ENCODE measurements at regions of chr12 and their contacts with region 1.

Region 1: GRCh38 chr12:25347716-25348271 is 97.1 kb upstream of the KRAS start:
- DNase-seq: peak; percentile 88 to 89
- H3K4me3 ChIP-seq: no peak overlapping the region
- H3K4me3 Mint-ChIP-seq: peak overlapping the region; percentile 19
- H3K27ac Mint-ChIP-seq: peak overlapping the region; percentile 78
- H3K4me1 ChIP-seq: peaks cover 29% of the 10 kb centered on the region
- H3K4me1 Mint-ChIP-seq: peaks cover 12% of the 10 kb centered on the region
- H3K27me3 ChIP-seq: no peaks in the 10 kb centered on the region
- H3K27me3 Mint-ChIP-seq: no peaks in the 10 kb centered on the region
- CTCF ChIP-seq: no peak

Region 2: GRCh38 chr12:25241167-25242020 is 106.4 kb before region 1 on chr12:
- CTCF ChIA-PET with region 1: no interaction called
- POLR2A ChIA-PET with region 1: no interaction called
- intact Hi-C with region 1: loop called (anchors 1 kb)
- DNase-seq: no peak
- H3K4me3 ChIP-seq: no peak overlapping the region
- H3K4me3 Mint-ChIP-seq: no peak overlapping the region
- H3K27ac Mint-ChIP-seq: no peak overlapping the region
- H3K4me1 ChIP-seq: peaks cover 39% of the 10 kb centered on the region
- H3K4me1 Mint-ChIP-seq: peaks cover 55% of the 10 kb centered on the region
- H3K27me3 ChIP-seq: no peaks in the 10 kb centered on the region
- H3K27me3 Mint-ChIP-seq: no peaks in the 10 kb centered on the region
- CTCF ChIP-seq: peak; percentile 72 to 83

Region 3: GRCh38 chr12:25256826-25257225 is 91.0 kb before region 1 on chr12:
- CTCF ChIA-PET with region 1: no interaction called
- POLR2A ChIA-PET with region 1: interaction called, 9 read pairs
- intact Hi-C with region 1: loop called (anchors 1 kb)
- DNase-seq: no peak
- H3K4me3 ChIP-seq: no peak overlapping the region
- H3K4me3 Mint-ChIP-seq: peak overlapping the region; percentile 43
- H3K27ac Mint-ChIP-seq: peak overlapping the region; percentile 79
- H3K4me1 ChIP-seq: peaks cover 61% of the 10 kb centered on the region
- H3K4me1 Mint-ChIP-seq: peaks cover 69% of the 10 kb centered on the region
- H3K27me3 ChIP-seq: no peaks in the 10 kb centered on the region
- H3K27me3 Mint-ChIP-seq: no peaks in the 10 kb centered on the region
- CTCF ChIP-seq: no peak

Region 4: GRCh38 chr12:25361511-25361910 is 13.7 kb after region 1 on chr12:
- CTCF ChIA-PET with region 1: no interaction called
- POLR2A ChIA-PET with region 1: interaction called, 3 read pairs
- intact Hi-C with region 1: loop called (anchors 1 kb)
- DNase-seq: no peak
- H3K4me3 ChIP-seq: no peak overlapping the region
- H3K4me3 Mint-ChIP-seq: no peak overlapping the region
- H3K27ac Mint-ChIP-seq: peak overlapping the region; percentile 65
- H3K4me1 ChIP-seq: peaks cover 14% of the 10 kb centered on the region
- H3K4me1 Mint-ChIP-seq: peaks cover 15% of the 10 kb centered on the region
- H3K27me3 ChIP-seq: no peaks in the 10 kb centered on the region
- H3K27me3 Mint-ChIP-seq: no peaks in the 10 kb centered on the region
- CTCF ChIP-seq: no peak

Region 5: DNA sequence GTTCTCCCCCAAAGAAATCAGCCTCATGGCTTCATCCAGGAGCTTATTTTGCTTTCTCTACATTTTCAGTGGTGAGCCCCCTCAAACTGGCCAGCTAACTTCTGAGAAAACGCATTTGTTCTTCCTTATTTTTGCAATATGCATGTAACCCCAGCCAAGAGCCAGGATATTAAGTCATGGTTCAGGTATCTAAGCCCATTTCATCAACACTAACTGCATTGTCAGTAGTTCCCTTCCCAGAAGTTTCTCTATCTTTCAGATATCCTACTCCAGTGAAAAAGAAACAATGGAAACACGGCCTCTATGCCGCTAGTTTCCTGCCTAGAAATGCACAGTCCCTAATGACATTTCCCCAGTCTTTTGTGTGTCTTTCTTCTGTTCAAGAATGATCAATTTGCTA is 507.9 kb after region 1 on chr12:
- CTCF ChIA-PET with region 1: no interaction called
- POLR2A ChIA-PET with region 1: no interaction called
- intact Hi-C with region 1: no loop called
- DNase-seq: no peak
- H3K4me3 ChIP-seq: no peak overlapping the region
- H3K4me3 Mint-ChIP-seq: no peak overlapping the region
- H3K27ac Mint-ChIP-seq: no peak overlapping the region
- H3K4me1 ChIP-seq: peaks cover 13% of the 10 kb centered on the region
- H3K4me1 Mint-ChIP-seq: peaks cover 17% of the 10 kb centered on the region
- H3K27me3 ChIP-seq: no peaks in the 10 kb centered on the region
- H3K27me3 Mint-ChIP-seq: no peaks in the 10 kb centered on the region
- CTCF ChIP-seq: no peak